HCT116 (cell line): ENCODE measurements at regions of chr1 and their contacts with region 1.

Region 1: GRCh38 chr1:90721210-90722194 is 4.4 kb upstream of the BARHL2 start:
- DNase-seq: peak; percentile 52
- ATAC-seq: peak; percentile 94
- H3K4me3 ChIP-seq: no peak overlapping the region
- H3K27ac ChIP-seq: no peak overlapping the region
- H3K4me1 ChIP-seq: peaks cover 0 to 5% of the 10 kb centered on the region in 2 experiments; a peak in 1 of 4 replicates
- H3K27me3 ChIP-seq: no peaks in the 10 kb centered on the region
- CTCF ChIP-seq: peak; percentile 83 to 93 (median 92)
- POLR2A ChIP-seq: no peak
- RAD21 ChIP-seq: peak; percentile 81

Region 2: DNA sequence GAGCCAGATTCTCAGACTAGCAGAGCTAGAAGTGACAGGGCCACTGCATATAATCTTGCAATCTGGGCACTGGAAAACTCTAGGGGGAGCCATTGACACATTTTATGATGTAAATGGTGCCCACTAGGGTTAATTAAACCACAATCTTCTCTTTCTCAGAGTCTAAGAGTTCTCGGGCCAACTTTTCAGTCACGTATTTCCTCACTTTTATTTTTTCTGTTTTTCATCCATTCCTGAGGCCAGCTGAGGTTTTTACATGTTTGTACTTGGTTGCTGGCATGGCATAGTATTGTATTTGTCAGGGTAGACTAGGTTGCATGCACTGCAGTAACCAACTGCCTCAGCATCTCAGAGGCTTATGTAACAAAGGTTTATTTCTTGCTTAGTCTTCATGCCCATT is 588.4 kb before region 1 on chr1:
- CTCF ChIA-PET with region 1: interaction called, 16 read pairs
- POLR2A ChIA-PET with region 1: no interaction called
- RAD21 ChIA-PET with region 1: no interaction called
- intact Hi-C with region 1: loop called (anchors 10 kb)
- DNase-seq: peak; percentile 31
- ATAC-seq: peak; percentile 88
- H3K4me3 ChIP-seq: no peak overlapping the region
- H3K27ac ChIP-seq: no peak overlapping the region
- H3K4me1 ChIP-seq: no peaks in the 10 kb centered on the region
- H3K27me3 ChIP-seq: peaks cover 17% of the 10 kb centered on the region; the same call in 1 of the 2 replicates
- CTCF ChIP-seq: peak; percentile 49 to 67 (median 55); a peak in 5 of 6 replicates
- POLR2A ChIP-seq: no peak
- RAD21 ChIP-seq: peak; percentile 71

Region 3: GRCh38 chr1:90513956-90514355 is 207.5 kb before region 1 on chr1:
- CTCF ChIA-PET with region 1: no interaction called
- POLR2A ChIA-PET with region 1: no interaction called
- RAD21 ChIA-PET with region 1: no interaction called
- intact Hi-C with region 1: no loop called
- DNase-seq: no peak
- ATAC-seq: no peak
- H3K4me3 ChIP-seq: no peak overlapping the region
- H3K27ac ChIP-seq: no peak overlapping the region
- H3K4me1 ChIP-seq: no peaks in the 10 kb centered on the region
- H3K27me3 ChIP-seq: peaks cover 25% of the 10 kb centered on the region; the same call in 1 of the 2 replicates
- CTCF ChIP-seq: no peak
- POLR2A ChIP-seq: no peak
- RAD21 ChIP-seq: no peak

Region 4: GRCh38 chr1:90616395-90616794 is 105.1 kb before region 1 on chr1:
- CTCF ChIA-PET with region 1: interaction called, 15 read pairs
- POLR2A ChIA-PET with region 1: no interaction called
- RAD21 ChIA-PET with region 1: no interaction called
- intact Hi-C with region 1: no loop called
- DNase-seq: peak; percentile 18
- ATAC-seq: peak; percentile 80
- H3K4me3 ChIP-seq: no peak overlapping the region
- H3K27ac ChIP-seq: no peak overlapping the region
- H3K4me1 ChIP-seq: no peaks in the 10 kb centered on the region
- H3K27me3 ChIP-seq: no peaks in the 10 kb centered on the region; the same call in 1 of the 2 replicates
- CTCF ChIP-seq: peak; percentile 17 to 57 (median 56); a peak in 4 of 6 replicates
- POLR2A ChIP-seq: no peak
- RAD21 ChIP-seq: peak; percentile 32; the same call in 1 of the 2 replicates

Region 5: GRCh38 chr1:90850898-90851710 is 129.6 kb after region 1 on chr1:
- CTCF ChIA-PET with region 1: interaction called, 3 read pairs
- POLR2A ChIA-PET with region 1: no interaction called
- RAD21 ChIA-PET with region 1: no interaction called
- intact Hi-C with region 1: loop called (anchors 1 kb)
- DNase-seq: peak; percentile 40
- ATAC-seq: peak; percentile 98
- H3K4me3 ChIP-seq: peak overlapping the region; percentile 57 to 68
- H3K27ac ChIP-seq: peak overlapping the region; percentile 60; the same call in 1 of the 2 replicates
- H3K4me1 ChIP-seq: peaks cover 0 to 15% of the 10 kb centered on the region in 2 experiments; a peak in 3 of 4 replicates
- H3K27me3 ChIP-seq: no peaks in the 10 kb centered on the region
- CTCF ChIP-seq: peak; percentile 5 to 56 (median 36); a peak in 3 of 6 replicates
- POLR2A ChIP-seq: no peak
- RAD21 ChIP-seq: no peak

Region 6: GRCh38 chr1:90964444-90965035 is 243.0 kb after region 1 on chr1:
- CTCF ChIA-PET with region 1: interaction called, 50 read pairs
- POLR2A ChIA-PET with region 1: no interaction called
- RAD21 ChIA-PET with region 1: interaction called in 1 of 2 experiments, 6 read pairs
- intact Hi-C with region 1: loop called (anchors 1 kb)
- DNase-seq: peak; percentile 13
- ATAC-seq: peak; percentile 61; the same call in 1 of the 2 replicates
- H3K4me3 ChIP-seq: no peak overlapping the region
- H3K27ac ChIP-seq: no peak overlapping the region
- H3K4me1 ChIP-seq: 0 out of 4 replicates have a peak, but pooled peaks cover 0 to 3% of the 10 kb centered on the region in 2 experiments
- H3K27me3 ChIP-seq: no peaks in the 10 kb centered on the region
- CTCF ChIP-seq: peak; percentile 23 to 55 (median 42); a peak in 4 of 6 replicates
- POLR2A ChIP-seq: no peak
- RAD21 ChIP-seq: peak; percentile 59

Region 7: GRCh38 chr1:91021686-91022517 is 300.4 kb after region 1 on chr1 and contains the start of gene ZNF644:
- CTCF ChIA-PET with region 1: interaction called, 9 read pairs
- POLR2A ChIA-PET with region 1: no interaction called
- RAD21 ChIA-PET with region 1: no interaction called
- intact Hi-C with region 1: loop called (anchors 5 kb)
- DNase-seq: peak; percentile 83
- ATAC-seq: peak; percentile 86
- H3K4me3 ChIP-seq: peak within 1 kb of the TSS; percentile 51 to 77
- H3K27ac ChIP-seq: peak within 1 kb of the TSS; percentile 96
- H3K4me1 ChIP-seq: peaks cover 17 to 45% of the 10 kb centered on the region in 2 experiments
- H3K27me3 ChIP-seq: no peaks in the 10 kb centered on the region
- CTCF ChIP-seq: no peak
- POLR2A ChIP-seq: peak; percentile 75
- RAD21 ChIP-seq: no peak
- total RNA-seq, gene ZNF644: 55.9 TPM